Spleen (tissue), 13 donors: ENCODE measurements at regions of chr12 and their contacts with region 1.

Region 1: GRCh38 chr12:121110211-121110940 is 22.3 kb upstream of the P2RX7 start:
- DNase-seq: no peak
- H3K4me3 ChIP-seq: no peak overlapping the region
- H3K27ac ChIP-seq: no peak overlapping the region
- H3K4me1 ChIP-seq: peaks cover 0 to 10% (median 6%) of the 10 kb centered on the region in 6 donors
- H3K27me3 ChIP-seq: no peaks in the 10 kb centered on the region
- CTCF ChIP-seq: peak; percentile 85 to 96 (median 94)
- POLR2A ChIP-seq: no peak

Region 2: GRCh38 chr12:120580787-120581723 is 529.3 kb before region 1 on chr12 and contains the start of gene POP5:
- intact Hi-C with region 1: loop called (anchors 10 kb)
- DNase-seq: peak; percentile 98
- H3K4me3 ChIP-seq: peak within 1 kb of the TSS; percentile 69 to 98 (median 88)
- H3K27ac ChIP-seq: peak within 1 kb of the TSS; percentile 46 to 91 (median 78)
- H3K4me1 ChIP-seq: peaks cover 9 to 68% (median 44%) of the 10 kb centered on the region in 6 donors
- H3K27me3 ChIP-seq: peaks cover 0 to 26% (median 0%) of the 10 kb centered on the region in 7 donors
- CTCF ChIP-seq: peak in 2 of 11 experiments; percentile 10 to 31
- POLR2A ChIP-seq: peak in 1 of 3 donors; percentile 47
- total RNA-seq, gene POP5: 28.1 to 54.0 (median 40.1) TPM

Region 3: DNA sequence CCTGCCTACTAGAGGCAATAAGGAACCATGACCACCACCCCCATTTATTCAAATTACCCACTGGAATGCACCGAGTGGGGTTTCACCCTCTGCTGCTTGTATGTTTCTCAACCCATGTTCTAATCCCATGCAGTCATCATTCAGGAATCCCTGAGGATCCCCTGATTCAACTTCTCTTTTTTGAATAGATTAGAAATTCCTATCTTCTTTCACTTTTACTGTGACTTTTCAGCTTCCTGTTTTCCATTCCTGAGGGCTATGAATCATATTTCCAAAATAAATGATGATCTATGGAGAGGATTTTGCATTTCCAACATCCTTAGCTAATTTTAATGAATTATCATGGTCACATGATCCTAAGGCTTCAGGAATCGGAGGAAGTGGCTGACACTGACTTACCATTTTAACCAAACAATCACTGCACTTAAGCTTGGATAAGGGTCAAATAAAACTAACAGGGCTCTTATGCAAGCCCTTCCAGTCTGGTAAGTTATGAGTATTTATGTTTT is 80.2 kb after region 1 on chr12:
- intact Hi-C with region 1: no loop called
- DNase-seq: no peak
- H3K4me3 ChIP-seq: no peak overlapping the region
- H3K27ac ChIP-seq: peak overlapping the region in 7 of 8 donors; percentile 13 to 74 (median 65)
- H3K4me1 ChIP-seq: peaks cover 0 to 15% (median 11%) of the 10 kb centered on the region in 6 donors
- H3K27me3 ChIP-seq: no peaks in the 10 kb centered on the region
- CTCF ChIP-seq: no peak
- POLR2A ChIP-seq: no peak

Region 4: GRCh38 chr12:121223292-121224285 is 113.2 kb after region 1 on chr12:
- intact Hi-C with region 1: loop called (anchors 10 kb)
- DNase-seq: no peak
- H3K4me3 ChIP-seq: no peak overlapping the region
- H3K27ac ChIP-seq: peak overlapping the region in 7 of 8 donors; percentile 25 to 78 (median 36)
- H3K4me1 ChIP-seq: peaks cover 0 to 37% (median 18%) of the 10 kb centered on the region in 6 donors
- H3K27me3 ChIP-seq: no peaks in the 10 kb centered on the region
- CTCF ChIP-seq: peak in 7 of 11 experiments; percentile 9 to 39 (median 26)
- POLR2A ChIP-seq: no peak

Region 5: DNA sequence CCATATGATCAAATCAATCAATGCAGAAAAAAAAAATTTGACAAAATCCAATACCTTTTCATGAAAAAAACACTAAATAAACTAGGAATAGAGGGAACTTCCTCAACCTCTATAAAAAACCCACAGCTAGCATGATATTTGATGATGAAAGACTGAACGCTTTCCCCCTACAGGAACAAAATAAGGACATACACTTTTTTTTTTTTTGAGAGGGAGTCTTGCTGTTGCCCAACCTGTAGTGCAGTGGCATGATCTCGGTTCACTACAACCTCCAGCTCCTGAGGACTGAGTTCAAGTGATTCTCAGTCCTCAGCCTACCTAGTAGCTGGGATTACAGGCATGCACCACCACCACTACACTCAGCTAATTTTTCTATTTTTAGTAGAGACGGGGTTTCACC is 204.1 kb after region 1 on chr12:
- intact Hi-C with region 1: no loop called
- DNase-seq: no peak
- H3K4me3 ChIP-seq: no peak overlapping the region
- H3K27ac ChIP-seq: peak overlapping the region in 3 of 8 donors; percentile 12 to 68 (median 26)
- H3K4me1 ChIP-seq: peaks cover 0 to 20% (median 6%) of the 10 kb centered on the region in 6 donors
- H3K27me3 ChIP-seq: no peaks in the 10 kb centered on the region
- CTCF ChIP-seq: no peak
- POLR2A ChIP-seq: no peak